Common myeloid progenitor, CD34-positive (primary cell): ENCODE measurements at regions of chr3 and their contacts with region 1.

Region 1: DNA sequence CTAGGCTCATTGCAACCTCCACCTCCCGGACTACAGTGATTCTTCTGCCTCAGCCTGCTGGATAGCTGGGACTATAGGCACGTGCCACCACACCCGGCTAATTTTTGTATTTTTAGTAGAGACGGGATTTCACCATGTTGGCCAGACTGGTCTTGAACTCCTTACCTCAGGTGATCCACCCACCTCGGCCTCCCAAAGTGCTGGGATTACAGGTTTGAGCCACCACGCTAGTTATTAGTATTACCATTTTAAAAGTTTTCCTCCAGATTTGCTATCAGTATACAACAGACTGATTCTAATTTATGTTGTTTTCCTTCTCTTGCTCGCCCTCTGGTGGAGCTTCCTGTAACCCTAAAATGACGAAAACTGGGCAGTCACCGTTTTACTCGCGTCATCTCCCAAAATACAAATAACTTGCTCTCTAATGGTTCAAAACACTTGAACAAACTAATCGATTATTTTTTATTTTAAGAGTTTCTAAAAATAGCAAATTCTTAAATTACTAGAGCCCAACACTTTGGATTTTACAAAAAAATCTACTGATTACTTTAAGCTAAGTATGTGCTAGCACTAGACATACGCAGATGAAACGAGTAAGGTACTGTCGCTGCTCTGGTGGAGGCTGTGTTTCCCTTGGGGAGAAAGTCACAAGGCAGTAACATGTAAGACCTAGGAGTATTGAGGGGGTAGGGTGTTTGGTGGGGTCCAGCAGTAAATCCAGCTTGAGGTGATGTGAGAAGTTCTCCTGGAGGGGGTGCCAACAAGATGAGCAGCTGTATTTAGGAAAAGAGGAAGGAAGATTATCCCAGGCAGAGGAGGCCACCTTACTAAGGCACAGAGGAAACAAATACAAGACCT is 203.3 kb downstream of the MBNL1 start:
- DNase-seq: peak; percentile 79 to 92 (median 91)
- H3K4me3 ChIP-seq: peak overlapping the region in 6 of 7 experiments; percentile 9 to 83 (median 65)
- H3K27ac ChIP-seq: peak overlapping the region; percentile 36 to 62
- H3K4me1 ChIP-seq: peaks cover 0 to 10% (median 7%) of the 10 kb centered on the region in 4 experiments
- H3K27me3 ChIP-seq: no peaks in the 10 kb centered on the region

Region 2: GRCh38 chr3:152071924-152072323 is 400.1 kb before region 1 on chr3:
- CTCF ChIA-PET with region 1: interaction called, 15 read pairs
- POLR2A ChIA-PET with region 1: no interaction called
- DNase-seq: peak; percentile 52 to 78 (median 76)
- H3K4me3 ChIP-seq: no peak overlapping the region
- H3K27ac ChIP-seq: no peak overlapping the region
- H3K4me1 ChIP-seq: no peaks in the 10 kb centered on the region
- H3K27me3 ChIP-seq: no peaks in the 10 kb centered on the region

Region 3: DNA sequence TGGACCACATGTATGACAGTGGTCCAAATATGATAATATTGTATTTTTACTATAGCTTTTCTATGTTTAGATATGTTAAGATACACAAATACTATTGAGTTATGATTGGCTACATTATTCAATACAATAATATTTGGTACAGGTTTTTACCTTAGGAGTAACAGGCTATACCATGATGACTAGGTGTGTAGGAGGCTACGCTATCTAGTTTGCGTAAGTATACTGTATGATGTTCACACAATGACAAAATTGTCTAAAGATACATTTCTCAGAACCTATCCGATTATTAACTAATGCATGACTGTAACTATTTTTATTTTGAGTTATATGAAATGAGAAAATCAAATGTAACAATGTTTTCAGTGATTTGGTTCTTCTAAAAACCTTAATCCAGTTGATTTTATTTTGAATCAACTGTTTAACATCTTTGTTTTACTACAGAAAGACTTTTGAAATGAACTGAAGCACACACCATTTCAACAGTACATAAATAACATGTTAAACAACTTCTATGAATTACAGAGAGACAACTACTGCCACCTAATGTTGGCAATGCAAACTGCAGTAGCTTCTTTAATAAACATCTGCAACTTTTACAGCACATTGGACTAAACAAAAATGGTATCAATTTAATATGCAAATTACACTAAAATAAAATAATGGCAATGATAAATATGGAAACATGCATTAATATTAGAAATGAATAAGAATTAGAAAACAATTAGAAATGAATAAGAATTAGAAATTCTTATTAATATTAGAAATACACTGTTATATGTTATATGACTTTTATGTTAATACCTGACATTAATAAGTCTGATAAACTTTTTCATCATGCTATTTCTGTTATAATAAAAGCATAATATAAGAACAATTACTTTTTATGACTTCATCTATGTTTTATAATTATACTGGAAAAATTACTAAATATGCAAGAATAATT is 52.4 kb after region 1 on chr3:
- CTCF ChIA-PET with region 1: interaction called, 14 read pairs
- POLR2A ChIA-PET with region 1: no interaction called
- DNase-seq: peak; percentile 54 to 81 (median 73)
- H3K4me3 ChIP-seq: no peak overlapping the region
- H3K27ac ChIP-seq: no peak overlapping the region
- H3K4me1 ChIP-seq: no peaks in the 10 kb centered on the region
- H3K27me3 ChIP-seq: no peaks in the 10 kb centered on the region

Region 4: GRCh38 chr3:152574461-152575079 is 102.5 kb after region 1 on chr3:
- CTCF ChIA-PET with region 1: interaction called, 16 read pairs
- POLR2A ChIA-PET with region 1: no interaction called
- DNase-seq: peak; percentile 54 to 75 (median 70)
- H3K4me3 ChIP-seq: no peak overlapping the region
- H3K27ac ChIP-seq: no peak overlapping the region
- H3K4me1 ChIP-seq: no peaks in the 10 kb centered on the region
- H3K27me3 ChIP-seq: no peaks in the 10 kb centered on the region